ENCODE measurements at regions of chr7 and their contacts with region 1.

Region 1: GRCh38 chr7:24665564-24666294 is 91.5 kb downstream of the GSDME start:
- DNase-seq: peak; percentile 71
- H3K4me3 Mint-ChIP-seq: no peak overlapping the region
- H3K27ac Mint-ChIP-seq: no peak overlapping the region
- H3K4me1 Mint-ChIP-seq: peaks cover 4% of the 10 kb centered on the region
- H3K27me3 Mint-ChIP-seq: no peaks in the 10 kb centered on the region

Region 2: GRCh38 chr7:23712368-23713284 is 953.1 kb before region 1 on chr7:
- CTCF ChIA-PET with region 1: no interaction called
- intact Hi-C with region 1: loop called (anchors 10 kb)
- DNase-seq: no peak
- H3K4me3 Mint-ChIP-seq: no peak overlapping the region
- H3K27ac Mint-ChIP-seq: no peak overlapping the region
- H3K4me1 Mint-ChIP-seq: no peaks in the 10 kb centered on the region
- H3K27me3 Mint-ChIP-seq: peaks cover 2% of the 10 kb centered on the region

Region 3: DNA sequence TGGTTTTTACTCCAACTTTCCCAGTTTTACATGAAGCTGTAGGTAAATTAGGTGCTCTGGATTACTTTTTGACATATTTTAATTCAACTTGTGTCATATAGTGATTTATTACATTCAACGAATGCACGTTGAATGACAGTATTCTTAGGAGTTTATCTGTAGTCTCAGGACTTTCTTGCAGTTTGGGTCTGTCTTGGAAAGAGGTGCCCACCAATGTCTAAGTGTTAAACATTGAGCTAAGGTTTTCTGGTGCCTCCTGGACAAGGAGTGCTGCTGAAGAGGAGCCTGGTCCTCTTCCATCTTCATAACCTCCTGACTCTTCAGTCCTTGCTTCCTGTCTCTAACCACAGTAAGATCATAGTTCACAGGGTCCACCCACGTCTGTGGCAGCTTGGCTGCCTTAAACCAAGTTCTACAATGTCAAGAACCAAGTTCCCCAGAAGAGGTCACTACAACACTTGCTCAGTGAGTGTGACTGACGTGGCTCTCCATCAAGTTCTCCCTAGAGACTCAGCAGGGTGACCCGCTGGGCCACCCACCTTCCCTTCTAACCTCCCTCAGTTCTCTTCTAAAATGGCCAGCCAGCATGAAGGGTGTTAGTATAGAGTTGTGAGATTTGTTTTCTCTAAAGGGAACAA is 375.6 kb before region 1 on chr7:
- CTCF ChIA-PET with region 1: interaction called, 8 read pairs
- intact Hi-C with region 1: loop called (anchors 1 kb)
- DNase-seq: peak; percentile 74
- H3K4me3 Mint-ChIP-seq: no peak overlapping the region
- H3K27ac Mint-ChIP-seq: no peak overlapping the region
- H3K4me1 Mint-ChIP-seq: peaks cover 12% of the 10 kb centered on the region
- H3K27me3 Mint-ChIP-seq: peaks cover 29% of the 10 kb centered on the region

Region 4: DNA sequence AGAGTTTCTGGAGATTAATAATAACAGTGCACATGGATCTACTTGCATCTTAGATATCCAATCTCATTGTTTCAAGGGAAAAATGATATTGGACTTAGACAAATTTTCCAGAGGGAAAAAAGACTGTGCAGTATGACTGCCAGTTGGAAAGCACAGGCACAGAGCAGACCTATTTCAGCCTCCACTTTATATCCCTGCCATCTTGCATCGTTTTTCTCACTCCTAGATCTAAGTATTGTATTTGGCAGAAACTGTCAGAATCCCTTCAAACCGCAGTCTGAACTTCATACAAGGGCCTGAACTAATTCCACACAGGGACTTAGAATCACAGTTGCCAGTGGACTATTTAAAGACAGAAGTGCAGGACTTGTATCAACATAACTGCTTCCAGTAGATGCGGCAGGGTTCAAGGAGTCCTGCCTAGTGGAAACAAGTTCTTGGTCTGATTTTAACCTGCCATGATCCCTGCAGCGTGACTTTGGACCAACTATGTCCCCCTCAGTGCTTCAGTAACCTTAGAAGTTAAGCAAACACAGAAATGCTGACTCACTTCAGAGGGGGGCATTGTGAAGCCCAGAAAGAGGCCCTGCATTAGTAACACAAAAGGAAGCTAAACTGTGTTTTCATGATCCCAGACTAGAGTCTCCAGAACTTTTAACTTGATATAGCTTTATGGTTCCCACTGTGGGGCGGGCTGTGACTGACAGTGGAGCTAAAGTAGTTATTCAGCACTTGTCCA is 188.2 kb before region 1 on chr7:
- CTCF ChIA-PET with region 1: no interaction called
- intact Hi-C with region 1: loop called (anchors 10 kb)
- DNase-seq: no peak
- H3K4me3 Mint-ChIP-seq: no peak overlapping the region
- H3K27ac Mint-ChIP-seq: no peak overlapping the region
- H3K4me1 Mint-ChIP-seq: no peaks in the 10 kb centered on the region
- H3K27me3 Mint-ChIP-seq: peaks cover 4% of the 10 kb centered on the region